Naive thymus-derived CD4-positive, alpha-beta T cell (primary cell): ENCODE measurements at regions of chr1 and their contacts with region 1.

Region 1: DNA sequence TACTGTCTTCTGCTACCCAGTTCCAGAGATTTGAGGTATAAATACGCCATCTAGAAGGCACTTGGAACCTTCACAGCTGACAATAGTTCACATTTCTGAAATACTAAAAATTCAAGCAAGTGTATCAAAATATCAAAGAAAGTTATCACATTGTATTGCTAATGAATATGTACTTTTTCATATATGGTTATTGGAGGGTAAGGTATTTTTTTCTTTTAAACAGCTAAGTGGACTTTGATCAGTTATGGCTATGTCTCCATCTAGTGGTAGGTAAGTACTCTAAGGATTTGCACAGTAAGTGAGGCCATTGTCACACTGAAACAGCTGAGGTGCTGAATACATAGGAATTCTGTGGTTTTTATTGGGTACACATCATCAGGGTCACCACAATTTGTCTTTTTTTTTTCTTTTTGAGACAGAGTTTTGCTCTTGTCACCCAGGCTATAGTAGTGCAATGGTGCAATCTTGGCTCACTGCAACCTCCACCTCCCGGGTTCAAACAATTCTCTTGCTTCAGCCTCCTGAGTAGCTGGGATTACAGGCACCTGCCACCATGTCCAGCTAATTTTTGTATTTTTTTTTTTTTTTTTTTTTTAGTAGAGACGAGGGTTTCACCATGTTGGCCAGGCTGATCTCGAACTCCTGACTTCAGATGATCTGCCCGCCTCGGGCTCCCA is 49.1 kb upstream of the CR2 start:
- DNase-seq: peak in 7 of 9 donors; percentile 25 to 69 (median 56)
- ATAC-seq: peak; percentile 89
- H3K4me3 ChIP-seq: no peak overlapping the region
- H3K4me3 Mint-ChIP-seq: no peak overlapping the region
- H3K27ac ChIP-seq: no peak overlapping the region
- H3K27ac Mint-ChIP-seq: no peak overlapping the region
- H3K4me1 ChIP-seq: no peaks in the 10 kb centered on the region
- H3K4me1 Mint-ChIP-seq: peaks cover 0 to 13% (median 0%) of the 10 kb centered on the region in 7 donors
- H3K27me3 ChIP-seq: no peaks in the 10 kb centered on the region
- H3K27me3 Mint-ChIP-seq: peaks cover 0 to 3% (median 0%) of the 10 kb centered on the region in 5 donors

Region 2: GRCh38 chr1:207052911-207053769 is 351.8 kb before region 1 on chr1 and contains the start of gene PFKFB2:
- CTCF ChIA-PET with region 1: interaction called, 10 read pairs
- POLR2A ChIA-PET with region 1: no interaction called
- intact Hi-C with region 1: loop called (anchors 1 kb)
- DNase-seq: peak; percentile 93 to 97 (median 96)
- ATAC-seq: peak; percentile 93
- H3K4me3 ChIP-seq: peak within 1 kb of the TSS; percentile 85
- H3K4me3 Mint-ChIP-seq: peak within 1 kb of the TSS; percentile 95 to 100 (median 98)
- H3K27ac ChIP-seq: peak within 1 kb of the TSS; percentile 72
- H3K27ac Mint-ChIP-seq: peak within 1 kb of the TSS; percentile 86 to 100 (median 97)
- H3K4me1 ChIP-seq: peaks cover 11 to 16% of the 10 kb centered on the region in 2 donors
- H3K4me1 Mint-ChIP-seq: peaks cover 25 to 54% (median 49%) of the 10 kb centered on the region in 7 donors
- H3K27me3 ChIP-seq: no peaks in the 10 kb centered on the region
- H3K27me3 Mint-ChIP-seq: peaks cover 0 to 12% (median 0%) of the 10 kb centered on the region in 5 donors
- total RNA-seq, gene PFKFB2: 2.3 to 4.6 (median 3.8) TPM

Region 3: DNA sequence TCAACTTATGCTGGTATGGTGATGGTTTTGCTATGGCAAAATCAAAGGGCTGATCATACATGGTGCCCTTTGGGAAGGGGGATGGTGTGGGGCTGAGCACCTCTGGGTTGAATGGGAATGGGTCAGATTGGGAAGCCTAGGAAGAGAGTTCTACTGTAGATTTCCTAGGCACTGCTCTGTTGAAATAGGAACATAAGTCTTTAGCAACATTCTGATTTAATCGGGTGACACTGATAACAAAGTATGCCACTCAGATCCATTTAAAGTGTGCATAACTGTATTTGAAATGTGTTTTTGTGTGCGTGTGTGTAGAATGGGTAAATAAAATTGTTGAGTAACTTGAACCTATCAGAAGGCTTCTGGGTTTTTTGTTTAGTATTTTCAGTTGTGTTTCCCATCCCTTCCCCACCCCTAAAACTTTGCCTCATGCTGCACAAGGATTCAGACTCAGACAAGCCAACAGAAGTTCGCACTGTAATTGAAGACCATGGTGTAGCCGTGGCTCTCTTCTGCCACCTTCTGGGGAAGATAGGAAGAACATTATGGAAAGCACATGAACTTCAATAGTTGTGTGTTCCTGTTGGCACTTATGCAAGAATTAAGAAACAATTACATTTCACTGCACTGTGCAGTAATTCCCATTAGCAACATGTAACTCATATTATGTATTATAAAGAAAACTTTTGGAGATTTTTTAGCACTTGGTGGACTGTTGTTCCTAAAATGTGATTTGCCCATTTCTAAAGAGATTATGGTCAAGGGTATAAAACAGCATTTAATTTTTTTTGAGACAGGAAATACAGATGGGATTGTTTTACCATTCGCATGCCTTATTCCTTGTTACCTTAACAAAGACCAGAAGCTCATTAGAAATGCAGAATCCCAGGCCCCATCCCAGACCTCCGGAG is 327.3 kb before region 1 on chr1:
- CTCF ChIA-PET with region 1: interaction called, 63 read pairs
- POLR2A ChIA-PET with region 1: interaction called, 6 read pairs
- intact Hi-C with region 1: no loop called
- DNase-seq: peak; percentile 21 to 85 (median 78)
- ATAC-seq: peak; percentile 98
- H3K4me3 ChIP-seq: no peak overlapping the region
- H3K4me3 Mint-ChIP-seq: no peak overlapping the region
- H3K27ac ChIP-seq: no peak overlapping the region
- H3K27ac Mint-ChIP-seq: peak overlapping the region in 3 of 9 donors; percentile 5 to 63 (median 28)
- H3K4me1 ChIP-seq: no peaks in the 10 kb centered on the region
- H3K4me1 Mint-ChIP-seq: peaks cover 0 to 14% (median 5%) of the 10 kb centered on the region in 7 donors
- H3K27me3 ChIP-seq: no peaks in the 10 kb centered on the region
- H3K27me3 Mint-ChIP-seq: peaks cover 0 to 52% (median 0%) of the 10 kb centered on the region in 5 donors

Region 4: DNA sequence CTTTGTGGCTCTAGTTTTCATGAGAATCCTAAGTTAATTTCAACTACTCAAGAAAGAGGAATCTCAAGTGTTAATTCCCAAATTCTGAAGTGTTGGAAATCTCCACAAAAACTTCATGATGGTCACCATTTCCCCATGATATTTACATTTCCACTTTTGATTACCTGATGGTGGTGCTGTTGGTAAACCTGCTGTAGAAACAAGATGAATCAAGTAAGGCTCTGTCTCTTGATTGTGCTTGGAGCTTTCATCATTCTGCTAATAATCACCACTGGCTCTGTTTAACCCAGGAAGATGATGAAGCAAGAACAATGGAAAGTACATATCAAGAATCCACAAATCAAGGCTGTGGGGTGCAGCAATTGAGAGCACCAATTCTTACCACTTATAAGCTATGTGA is 223.1 kb before region 1 on chr1:
- CTCF ChIA-PET with region 1: interaction called, 53 read pairs
- POLR2A ChIA-PET with region 1: no interaction called
- intact Hi-C with region 1: loop called (anchors 1 kb)
- DNase-seq: peak in 5 of 9 donors; percentile 5 to 35 (median 10)
- ATAC-seq: no peak
- H3K4me3 ChIP-seq: no peak overlapping the region
- H3K4me3 Mint-ChIP-seq: no peak overlapping the region
- H3K27ac ChIP-seq: no peak overlapping the region
- H3K27ac Mint-ChIP-seq: no peak overlapping the region
- H3K4me1 ChIP-seq: no peaks in the 10 kb centered on the region
- H3K4me1 Mint-ChIP-seq: peaks cover 0 to 5% (median 0%) of the 10 kb centered on the region in 7 donors
- H3K27me3 ChIP-seq: no peaks in the 10 kb centered on the region
- H3K27me3 Mint-ChIP-seq: peaks cover 0 to 39% (median 9%) of the 10 kb centered on the region in 5 donors

Region 5: DNA sequence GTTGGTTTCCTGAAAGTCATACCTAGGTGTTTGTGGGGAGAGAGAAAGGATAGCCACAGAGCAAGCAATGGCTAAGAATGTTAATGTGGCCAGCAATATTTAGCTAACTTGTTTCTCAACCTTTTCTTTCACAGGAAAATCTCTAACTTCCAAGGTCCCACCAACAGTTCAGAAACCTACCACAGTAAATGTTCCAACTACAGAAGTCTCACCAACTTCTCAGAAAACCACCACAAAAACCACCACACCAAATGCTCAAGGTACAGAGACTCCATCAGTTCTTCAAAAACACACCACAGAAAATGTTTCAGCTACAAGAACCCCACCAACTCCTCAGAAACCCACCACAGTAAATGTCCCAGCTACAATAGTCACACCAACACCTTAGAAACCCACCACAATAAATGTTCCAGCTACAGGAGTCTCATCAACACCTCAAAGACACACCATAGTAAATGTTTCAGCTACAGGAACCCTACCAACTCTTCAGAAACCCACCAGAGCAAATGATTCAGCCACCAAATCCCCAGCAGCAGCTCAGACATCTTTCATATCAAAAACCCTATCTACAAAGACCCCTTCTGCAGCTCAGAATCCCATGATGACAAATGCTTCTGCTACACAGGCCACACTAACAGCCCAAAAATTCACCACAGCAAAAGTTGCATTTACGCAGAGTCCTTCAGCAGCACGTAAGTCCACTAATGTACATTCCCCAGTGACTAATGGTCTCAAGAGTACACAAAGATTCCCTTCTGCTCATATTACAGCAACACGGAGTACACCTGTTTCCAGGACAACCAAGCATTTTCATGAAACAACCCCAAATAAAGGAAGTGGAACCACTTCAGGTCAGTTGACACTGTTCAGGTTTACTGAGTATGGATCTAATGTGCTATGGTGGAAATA is 68.2 kb before region 1 on chr1:
- CTCF ChIA-PET with region 1: interaction called, 3 read pairs
- POLR2A ChIA-PET with region 1: interaction called, 3 read pairs
- intact Hi-C with region 1: loop called in 1 of 2 experiments (anchors 2 kb)
- DNase-seq: peak in 8 of 9 donors; percentile 42 to 67 (median 55)
- ATAC-seq: peak; percentile 56
- H3K4me3 ChIP-seq: peak overlapping the region; percentile 31
- H3K4me3 Mint-ChIP-seq: peak overlapping the region; percentile 35 to 78 (median 71)
- H3K27ac ChIP-seq: peak overlapping the region; percentile 65
- H3K27ac Mint-ChIP-seq: peak overlapping the region; percentile 70 to 94 (median 88)
- H3K4me1 ChIP-seq: peaks cover 24 to 38% of the 10 kb centered on the region in 2 donors
- H3K4me1 Mint-ChIP-seq: peaks cover 46 to 86% (median 74%) of the 10 kb centered on the region in 7 donors
- H3K27me3 ChIP-seq: no peaks in the 10 kb centered on the region
- H3K27me3 Mint-ChIP-seq: no peaks in the 10 kb centered on the region